HCT116 (cell line): ENCODE measurements at regions of chr7 and their contacts with region 1.

Region 1: GRCh38 chr7:110600956-110601355 is 490.0 kb upstream of the LRRN3 start:
- DNase-seq: no peak
- ATAC-seq: no peak
- H3K4me3 ChIP-seq: no peak overlapping the region
- H3K27ac ChIP-seq: no peak overlapping the region
- H3K4me1 ChIP-seq: no peaks in the 10 kb centered on the region
- H3K27me3 ChIP-seq: no peaks in the 10 kb centered on the region
- CTCF ChIP-seq: no peak
- POLR2A ChIP-seq: no peak
- RAD21 ChIP-seq: no peak

Region 2: DNA sequence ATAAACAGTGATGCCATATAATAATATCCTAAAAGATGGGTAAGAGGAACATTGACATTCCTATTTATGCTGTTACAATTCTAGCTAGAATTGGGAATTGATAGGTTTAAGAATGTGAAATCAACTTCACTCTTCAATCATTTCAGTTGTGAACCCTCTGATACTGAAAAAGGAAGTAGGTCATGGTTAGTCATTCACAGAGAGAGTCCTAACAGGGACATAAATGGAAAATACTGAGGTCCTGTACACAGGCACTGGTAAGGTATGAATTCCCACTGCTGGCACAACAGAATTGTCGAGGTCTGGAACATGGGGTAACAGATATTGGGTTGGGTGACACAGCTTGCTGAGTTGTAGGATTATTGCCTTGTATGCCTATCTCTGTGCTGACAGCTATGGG is 200.5 kb after region 1 on chr7:
- CTCF ChIA-PET with region 1: no interaction called
- POLR2A ChIA-PET with region 1: no interaction called
- RAD21 ChIA-PET with region 1: no interaction called
- intact Hi-C with region 1: no loop called
- DNase-seq: no peak
- ATAC-seq: no peak
- H3K4me3 ChIP-seq: no peak overlapping the region
- H3K27ac ChIP-seq: no peak overlapping the region
- H3K4me1 ChIP-seq: no peaks in the 10 kb centered on the region
- H3K27me3 ChIP-seq: no peaks in the 10 kb centered on the region
- CTCF ChIP-seq: no peak
- POLR2A ChIP-seq: no peak
- RAD21 ChIP-seq: no peak

Region 3: DNA sequence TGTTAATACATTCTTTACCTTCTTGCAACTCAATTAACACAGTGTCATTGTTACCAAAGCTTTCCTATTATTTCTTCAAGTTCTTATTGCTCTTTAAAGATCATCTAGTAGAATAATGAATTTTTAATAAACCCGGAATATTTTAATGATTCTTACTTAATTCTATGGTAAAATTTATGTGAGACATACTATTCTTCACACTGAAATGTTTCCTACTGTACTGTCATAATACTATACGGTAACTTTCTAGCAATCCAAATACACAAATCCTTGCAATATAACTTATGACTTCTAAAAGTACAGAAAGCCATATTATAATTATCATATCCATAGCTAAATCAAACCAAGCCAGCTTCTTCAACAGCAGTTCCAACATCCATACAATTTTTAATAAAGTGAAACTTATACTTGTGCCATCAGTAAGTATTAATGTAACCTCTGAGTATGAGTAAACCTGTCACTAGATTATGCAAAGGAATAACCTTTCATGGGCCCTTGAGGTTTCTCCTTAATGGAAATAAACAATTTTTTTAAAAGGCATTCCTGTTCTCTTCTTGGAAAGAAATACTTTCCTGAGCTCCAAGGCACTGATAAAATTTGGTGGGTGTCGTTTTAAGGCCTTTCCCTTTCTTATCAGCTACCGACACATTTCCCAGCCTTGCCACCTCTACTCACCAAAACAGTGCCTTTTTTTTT is 873.9 kb after region 1 on chr7:
- CTCF ChIA-PET with region 1: no interaction called
- POLR2A ChIA-PET with region 1: no interaction called
- RAD21 ChIA-PET with region 1: no interaction called
- intact Hi-C with region 1: loop called (anchors 10 kb)
- DNase-seq: no peak
- ATAC-seq: no peak
- H3K4me3 ChIP-seq: no peak overlapping the region
- H3K27ac ChIP-seq: no peak overlapping the region
- H3K4me1 ChIP-seq: no peaks in the 10 kb centered on the region
- H3K27me3 ChIP-seq: no peaks in the 10 kb centered on the region
- CTCF ChIP-seq: no peak
- POLR2A ChIP-seq: no peak
- RAD21 ChIP-seq: no peak